ENCODE measurements at regions of chr20 and their contacts with region 1.

Region 1: GRCh38 chr20:47379433-47380150 is 23.1 kb upstream of the ZMYND8 start:
- DNase-seq: peak in 1 of 5 donors; percentile 40
- H3K4me3 ChIP-seq: no peak overlapping the region
- H3K27ac ChIP-seq: no peak overlapping the region
- H3K4me1 ChIP-seq: peaks cover 4% of the 10 kb centered on the region
- H3K27me3 ChIP-seq: no peaks in the 10 kb centered on the region
- CTCF ChIP-seq: no peak
- EP300 ChIP-seq: no peak
- POLR2A ChIP-seq: no peak

Region 2: DNA sequence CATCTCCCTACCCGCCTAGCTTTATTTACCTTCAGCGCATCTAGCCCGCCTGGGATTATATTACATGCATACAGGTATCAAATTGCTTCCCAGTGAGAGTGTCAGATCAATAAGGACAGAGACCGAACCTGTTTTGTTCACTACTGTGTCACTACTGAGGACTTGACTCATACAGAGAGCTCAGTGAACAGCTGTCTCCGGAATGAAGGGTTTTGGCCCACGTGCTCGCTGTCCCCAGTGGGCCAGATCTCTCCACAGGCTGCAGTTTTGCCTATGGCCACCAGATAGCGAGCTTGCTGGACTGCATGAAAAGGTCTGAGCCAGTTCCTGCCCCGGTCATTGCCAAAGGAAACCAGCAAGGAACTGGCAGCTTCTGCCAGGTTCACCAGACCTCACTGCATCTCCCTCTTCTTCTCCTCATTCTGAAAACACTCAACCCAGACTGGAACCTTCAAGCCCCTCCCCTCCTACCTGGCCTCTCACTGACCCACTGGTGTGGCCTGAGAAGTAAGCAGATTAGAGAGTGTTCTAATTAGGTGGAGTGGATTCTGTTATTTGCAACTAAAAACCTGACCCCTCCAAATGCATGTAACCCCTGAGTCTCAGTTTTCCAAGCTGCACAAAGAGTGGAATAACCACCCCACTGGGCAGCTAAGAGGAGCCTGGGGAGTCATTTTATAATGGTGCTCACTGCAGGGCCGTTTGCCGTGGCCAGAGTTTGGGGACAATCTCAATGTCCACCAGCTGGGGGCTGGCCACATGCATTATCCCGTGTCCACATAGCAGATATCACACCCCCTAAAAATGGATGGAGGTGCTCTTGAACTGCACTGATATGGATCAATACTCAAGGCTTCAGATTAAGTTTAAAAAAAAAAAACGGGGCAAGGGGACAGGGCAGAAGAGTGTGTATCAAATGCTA is 173.8 kb before region 1 on chr20:
- intact Hi-C with region 1: loop called in 1 of 4 experiments (anchors 5 kb)
- DNase-seq: peak in 2 of 5 donors; percentile 54 to 66
- H3K4me3 ChIP-seq: no peak overlapping the region
- H3K27ac ChIP-seq: no peak overlapping the region
- H3K4me1 ChIP-seq: no peaks in the 10 kb centered on the region
- H3K27me3 ChIP-seq: no peaks in the 10 kb centered on the region
- CTCF ChIP-seq: peak in 1 of 3 donors; percentile 55
- EP300 ChIP-seq: no peak
- POLR2A ChIP-seq: no peak

Region 3: GRCh38 chr20:47272893-47273590 is 106.5 kb before region 1 on chr20:
- intact Hi-C with region 1: loop called (anchors 2 to 5 kb)
- DNase-seq: peak in 3 of 5 donors; percentile 31 to 67 (median 46)
- H3K4me3 ChIP-seq: no peak overlapping the region
- H3K27ac ChIP-seq: peak overlapping the region; percentile 33 to 51
- H3K4me1 ChIP-seq: peaks cover 2% of the 10 kb centered on the region
- H3K27me3 ChIP-seq: no peaks in the 10 kb centered on the region
- CTCF ChIP-seq: peak; percentile 74 to 98 (median 97)
- EP300 ChIP-seq: no peak
- POLR2A ChIP-seq: no peak

Region 4: DNA sequence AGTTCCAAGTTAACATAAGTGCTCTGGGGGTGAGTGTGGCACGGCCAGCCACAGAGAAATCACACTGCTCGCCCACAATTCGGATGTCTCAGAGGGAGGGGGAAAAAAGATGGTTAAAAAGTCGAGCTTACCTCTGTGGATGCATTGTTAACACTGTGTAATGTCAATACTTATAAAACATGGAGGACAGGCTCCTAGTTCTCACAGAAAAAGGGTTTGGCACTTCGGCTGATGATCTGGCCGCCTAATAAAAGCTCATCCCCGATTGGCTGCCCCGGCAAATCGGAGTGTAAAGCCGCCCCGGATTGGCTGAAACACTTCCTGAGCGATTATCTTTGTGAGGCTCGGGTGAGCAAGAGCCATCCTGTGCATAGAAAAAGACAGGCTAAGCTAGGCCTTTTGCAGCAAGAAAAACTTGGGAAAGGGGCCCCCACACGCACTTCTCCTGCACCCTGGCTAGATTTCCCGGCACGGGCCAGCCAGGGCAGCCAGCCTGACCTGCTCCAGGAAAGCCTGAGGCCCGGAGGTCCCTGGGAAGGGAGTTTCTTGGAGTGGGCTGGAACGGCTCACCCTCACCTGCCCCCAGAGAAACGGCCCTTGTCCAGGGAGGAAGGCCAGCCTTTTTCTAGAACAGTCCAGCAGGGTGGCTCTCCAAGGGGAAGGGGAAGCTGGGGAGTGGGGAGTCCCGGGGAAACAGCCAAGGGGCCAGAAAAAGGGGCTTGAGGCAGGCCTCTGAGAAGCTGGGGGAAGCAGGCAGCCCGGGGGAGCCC is 22.9 kb before region 1 on chr20 and contains the start of gene ZMYND8:
- intact Hi-C with region 1: loop called in 1 of 4 experiments (anchors 1 kb)
- DNase-seq: peak; percentile 87 to 99 (median 92)
- H3K4me3 ChIP-seq: no peak within 1 kb of the TSS
- H3K27ac ChIP-seq: peak within 1 kb of the TSS; percentile 83 to 95
- H3K4me1 ChIP-seq: peaks cover 54% of the 10 kb centered on the region
- H3K27me3 ChIP-seq: no peaks in the 10 kb centered on the region
- CTCF ChIP-seq: no peak
- EP300 ChIP-seq: no peak
- POLR2A ChIP-seq: no peak
- total RNA-seq, gene ZMYND8: 20.3 to 40.7 (median 31.2) TPM